ENCODE measurements at regions of chr5 and their contacts with region 1.

Region 1: GRCh38 chr5:123099514-123100151 is 10.6 kb downstream of the PRDM6 start:
- DNase-seq: peak in 1 of 2 donors; percentile 73
- H3K4me3 ChIP-seq: peak overlapping the region; percentile 48 to 97
- H3K27ac ChIP-seq: peak overlapping the region; percentile 95 to 99
- H3K4me1 ChIP-seq: peaks cover 0 to 9% of the 10 kb centered on the region in 2 donors
- H3K27me3 ChIP-seq: no peaks in the 10 kb centered on the region
- CTCF ChIP-seq: peak; percentile 5 to 35 (median 32)

Region 2: DNA sequence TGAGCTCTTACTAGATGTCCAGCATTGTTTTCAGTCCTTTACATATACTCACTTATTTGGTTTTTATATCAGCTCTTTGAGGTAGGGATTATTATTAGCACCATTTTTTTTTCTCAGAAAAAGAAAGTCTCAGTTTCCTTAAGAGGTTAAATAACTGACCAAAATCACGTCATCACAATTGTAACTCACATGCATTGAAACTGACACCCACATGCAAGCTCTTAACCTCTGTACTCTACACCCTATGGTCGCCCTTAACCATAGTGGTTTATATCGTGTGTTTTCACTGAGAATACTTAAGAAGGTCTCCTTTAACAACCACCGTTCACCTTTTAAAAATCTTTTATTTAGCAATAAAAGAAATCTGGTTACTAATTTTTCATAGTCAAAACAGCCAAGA is 50.5 kb after region 1 on chr5:
- intact Hi-C with region 1: loop called (anchors 2 kb)
- DNase-seq: no peak
- H3K4me3 ChIP-seq: no peak overlapping the region
- H3K27ac ChIP-seq: peak overlapping the region; percentile 74 to 79
- H3K4me1 ChIP-seq: peaks cover 13 to 47% of the 10 kb centered on the region in 2 donors
- H3K27me3 ChIP-seq: no peaks in the 10 kb centered on the region
- CTCF ChIP-seq: no peak

Region 3: DNA sequence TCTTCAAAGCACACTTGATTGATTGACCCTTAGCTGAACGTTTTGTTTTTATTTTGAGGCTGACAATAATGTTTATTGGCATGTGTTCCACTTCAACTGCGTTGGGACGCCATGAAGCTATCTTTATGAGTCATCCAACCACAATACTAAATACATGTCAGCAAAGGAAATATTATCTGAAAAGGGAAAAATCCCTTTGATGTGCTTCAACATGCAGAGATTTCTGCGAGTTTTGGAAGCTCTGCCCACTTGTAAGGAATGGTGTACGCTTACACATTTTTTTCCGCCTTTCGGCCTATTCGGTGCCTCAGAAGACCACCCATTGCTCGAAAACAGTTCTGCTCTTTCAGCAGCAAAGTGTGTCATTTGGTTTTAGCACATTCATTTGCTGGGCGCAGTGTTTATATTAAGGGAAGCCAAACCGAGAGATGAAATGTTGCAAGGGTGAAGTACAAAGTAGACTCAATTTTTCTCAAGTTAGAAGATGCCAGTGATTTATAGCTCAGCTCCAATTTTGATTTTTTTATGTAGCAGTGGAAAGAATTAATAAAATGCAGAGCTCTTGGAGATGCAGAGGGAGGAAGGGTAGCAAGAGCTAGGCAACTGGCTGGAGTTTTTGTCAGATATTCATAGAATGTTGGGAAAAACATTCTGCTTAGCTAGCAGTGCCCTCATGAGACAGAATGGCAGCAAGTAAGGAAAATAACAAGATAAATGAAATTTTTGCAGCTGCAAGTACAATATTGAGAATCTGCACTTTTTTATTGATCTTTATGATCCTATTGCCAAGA is 58.4 kb after region 1 on chr5:
- intact Hi-C with region 1: loop called (anchors 2 kb)
- DNase-seq: no peak
- H3K4me3 ChIP-seq: peak overlapping the region in 1 of 2 donors; percentile 24
- H3K27ac ChIP-seq: peak overlapping the region; percentile 79 to 82
- H3K4me1 ChIP-seq: peaks cover 5 to 55% of the 10 kb centered on the region in 2 donors
- H3K27me3 ChIP-seq: no peaks in the 10 kb centered on the region
- CTCF ChIP-seq: peak in 1 of 3 experiments; percentile 11

Region 4: GRCh38 chr5:123285122-123286023 is 185.7 kb after region 1 on chr5:
- intact Hi-C with region 1: loop called (anchors 2 kb)
- DNase-seq: peak in 1 of 2 donors; percentile 74
- H3K4me3 ChIP-seq: peak overlapping the region; percentile 57 to 65
- H3K27ac ChIP-seq: peak overlapping the region; percentile 91 to 92
- H3K4me1 ChIP-seq: peaks cover 0 to 8% of the 10 kb centered on the region in 2 donors
- H3K27me3 ChIP-seq: no peaks in the 10 kb centered on the region
- CTCF ChIP-seq: no peak

Region 5: GRCh38 chr5:123344816-123345426 is 245.3 kb after region 1 on chr5:
- intact Hi-C with region 1: loop called (anchors 2 kb)
- DNase-seq: peak in 1 of 2 donors; percentile 69
- H3K4me3 ChIP-seq: peak overlapping the region in 1 of 2 donors; percentile 33
- H3K27ac ChIP-seq: no peak overlapping the region
- H3K4me1 ChIP-seq: peaks cover 0 to 28% of the 10 kb centered on the region in 2 donors
- H3K27me3 ChIP-seq: no peaks in the 10 kb centered on the region
- CTCF ChIP-seq: peak; percentile 43 to 83 (median 73)